ENCODE measurements at regions of chr10 and their contacts with region 1.

Region 1: GRCh38 chr10:131928248-131929095 is 27.7 kb downstream of the PPP2R2D start:
- DNase-seq: peak; percentile 31
- H3K4me3 Mint-ChIP-seq: peak overlapping the region; percentile 34
- H3K27ac Mint-ChIP-seq: peak overlapping the region; percentile 85
- H3K4me1 Mint-ChIP-seq: peaks cover 65% of the 10 kb centered on the region
- H3K27me3 Mint-ChIP-seq: no peaks in the 10 kb centered on the region

Region 2: GRCh38 chr10:131892806-131893675 is 35.4 kb before region 1 on chr10:
- intact Hi-C with region 1: no loop called
- DNase-seq: no peak
- H3K4me3 Mint-ChIP-seq: no peak overlapping the region
- H3K27ac Mint-ChIP-seq: no peak overlapping the region
- H3K4me1 Mint-ChIP-seq: peaks cover 10% of the 10 kb centered on the region
- H3K27me3 Mint-ChIP-seq: peaks cover 11% of the 10 kb centered on the region

Region 3: GRCh38 chr10:131915990-131916766 is 12.3 kb before region 1 on chr10:
- intact Hi-C with region 1: loop called (anchors 1 kb)
- DNase-seq: no peak
- H3K4me3 Mint-ChIP-seq: no peak overlapping the region
- H3K27ac Mint-ChIP-seq: peak overlapping the region; percentile 92
- H3K4me1 Mint-ChIP-seq: peaks cover 47% of the 10 kb centered on the region
- H3K27me3 Mint-ChIP-seq: no peaks in the 10 kb centered on the region

Region 4: GRCh38 chr10:131981429-131982184 is 53.1 kb after region 1 on chr10 and contains the start of gene BNIP3:
- intact Hi-C with region 1: loop called (anchors 2 kb)
- DNase-seq: peak; percentile 90
- H3K4me3 Mint-ChIP-seq: peak within 1 kb of the TSS; percentile 88
- H3K27ac Mint-ChIP-seq: peak within 1 kb of the TSS; percentile 48
- H3K4me1 Mint-ChIP-seq: peaks cover 36% of the 10 kb centered on the region
- H3K27me3 Mint-ChIP-seq: peaks cover 25% of the 10 kb centered on the region
- total RNA-seq, gene BNIP3: 43.0 and 48.9 TPM in 2 replicates